Mammary epithelial cell (primary cell): ENCODE measurements at regions of chr11 and their contacts with region 1.

Region 1: DNA sequence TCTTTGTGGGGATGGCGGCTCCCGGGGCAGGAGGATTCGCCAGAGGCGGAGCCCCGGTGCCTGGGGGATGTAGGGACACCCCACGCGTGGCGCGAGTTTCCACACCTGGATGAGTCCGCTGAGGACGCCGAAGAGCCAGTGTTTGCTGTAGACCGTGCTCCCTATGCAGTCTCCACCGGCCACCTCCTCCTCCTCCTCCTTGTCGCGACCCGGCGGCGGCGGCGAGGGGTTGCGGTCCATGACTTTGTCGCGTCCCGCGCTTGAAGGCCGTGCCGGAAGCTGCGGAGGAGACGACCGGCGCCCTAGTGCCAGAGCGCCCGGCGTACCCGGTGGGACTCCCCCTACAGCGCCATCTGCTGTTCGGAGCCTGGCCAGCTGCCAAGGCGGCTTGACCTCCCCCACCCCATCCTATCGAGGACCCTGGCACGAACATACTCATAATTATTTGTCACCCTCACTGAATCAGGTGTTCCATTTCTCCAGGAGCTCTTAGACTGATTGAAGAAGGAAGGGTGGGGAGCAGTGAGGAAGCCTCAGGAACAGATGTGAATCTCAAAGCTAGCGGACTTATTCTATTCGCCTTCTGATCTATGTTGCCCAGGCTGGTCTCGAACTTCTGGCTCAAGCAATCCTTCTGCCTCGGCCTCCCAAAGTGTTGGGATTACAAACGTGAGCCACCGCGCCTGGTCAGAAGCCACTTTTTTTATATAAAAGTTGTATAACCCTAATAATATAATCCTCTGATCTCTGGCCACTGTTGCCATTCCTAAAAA is at the start of gene SAAL1:
- DNase-seq: peak; percentile 65
- H3K4me3 ChIP-seq: peak within 1 kb of the TSS; percentile 84 to 98 (median 93)
- H3K27ac ChIP-seq: peak within 1 kb of the TSS; percentile 56
- H3K4me1 ChIP-seq: peaks cover 18% of the 10 kb centered on the region
- H3K27me3 ChIP-seq: no peaks in the 10 kb centered on the region
- CTCF ChIP-seq: peak; percentile 57 to 81
- total RNA-seq, gene SAAL1: 12.2 to 24.6 TPM

Region 2: DNA sequence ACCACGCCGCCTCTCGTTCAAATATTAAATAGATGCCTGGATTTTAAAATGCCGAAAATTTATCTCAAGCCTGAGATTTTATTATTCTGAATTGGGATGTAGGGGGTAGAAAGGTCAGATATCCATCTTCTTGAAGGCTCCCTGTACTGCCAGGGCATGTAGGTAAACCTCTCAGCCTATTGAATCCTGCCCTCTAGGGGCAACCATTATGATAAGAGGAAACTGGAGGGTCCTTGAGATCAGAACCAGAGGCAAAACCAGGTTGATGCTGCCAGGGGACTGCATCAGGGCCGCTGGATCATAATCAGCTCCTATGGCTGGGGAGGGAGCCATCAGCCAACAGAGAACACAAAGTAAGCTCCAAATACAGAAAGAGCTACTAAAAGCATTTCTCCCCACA is 279.0 kb before region 1 on chr11:
- CTCF ChIA-PET with region 1: no interaction called
- dilution Hi-C with region 1: no loop called
- in situ Hi-C with region 1: no loop called
- intact Hi-C with region 1: no loop called
- DNase-seq: no peak
- H3K4me3 ChIP-seq: no peak overlapping the region
- H3K27ac ChIP-seq: no peak overlapping the region
- H3K4me1 ChIP-seq: no peaks in the 10 kb centered on the region
- H3K27me3 ChIP-seq: no peaks in the 10 kb centered on the region
- CTCF ChIP-seq: peak in 1 of 2 donors; percentile 61

Region 3: DNA sequence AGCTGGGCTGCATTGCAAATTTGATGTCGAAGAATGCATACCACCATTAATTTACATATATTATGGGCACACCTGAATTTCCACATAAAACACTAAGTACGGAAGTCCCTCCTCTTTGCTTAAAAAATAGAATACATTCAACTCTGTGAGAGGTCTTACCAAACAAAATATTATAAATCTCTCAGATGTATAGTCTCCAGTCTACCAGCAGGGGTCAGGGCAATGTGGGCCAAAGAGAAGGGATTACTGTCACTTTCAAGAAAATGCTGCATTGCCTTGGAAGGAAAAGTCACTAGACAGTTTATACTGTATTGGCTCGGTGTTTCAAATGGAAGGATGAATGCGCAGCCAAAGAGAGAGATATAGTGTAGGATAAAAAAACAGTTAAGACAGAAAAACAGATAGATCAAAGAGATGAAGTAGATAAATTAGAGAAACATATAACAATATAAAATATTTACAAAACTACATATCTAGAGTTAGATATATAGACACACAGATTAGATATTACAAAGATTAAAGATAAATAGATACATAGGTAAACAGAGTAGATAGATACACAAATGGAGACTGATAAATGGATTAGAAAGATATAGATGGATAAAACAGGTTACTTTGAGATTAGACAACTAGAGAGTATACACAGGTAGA is 114.1 kb before region 1 on chr11:
- CTCF ChIA-PET with region 1: no interaction called
- dilution Hi-C with region 1: no loop called
- in situ Hi-C with region 1: no loop called
- intact Hi-C with region 1: loop called (anchors 1 kb)
- DNase-seq: peak; percentile 32
- H3K4me3 ChIP-seq: no peak overlapping the region
- H3K27ac ChIP-seq: no peak overlapping the region
- H3K4me1 ChIP-seq: peaks cover 11% of the 10 kb centered on the region
- H3K27me3 ChIP-seq: no peaks in the 10 kb centered on the region
- CTCF ChIP-seq: peak; percentile 83 to 89

Region 4: DNA sequence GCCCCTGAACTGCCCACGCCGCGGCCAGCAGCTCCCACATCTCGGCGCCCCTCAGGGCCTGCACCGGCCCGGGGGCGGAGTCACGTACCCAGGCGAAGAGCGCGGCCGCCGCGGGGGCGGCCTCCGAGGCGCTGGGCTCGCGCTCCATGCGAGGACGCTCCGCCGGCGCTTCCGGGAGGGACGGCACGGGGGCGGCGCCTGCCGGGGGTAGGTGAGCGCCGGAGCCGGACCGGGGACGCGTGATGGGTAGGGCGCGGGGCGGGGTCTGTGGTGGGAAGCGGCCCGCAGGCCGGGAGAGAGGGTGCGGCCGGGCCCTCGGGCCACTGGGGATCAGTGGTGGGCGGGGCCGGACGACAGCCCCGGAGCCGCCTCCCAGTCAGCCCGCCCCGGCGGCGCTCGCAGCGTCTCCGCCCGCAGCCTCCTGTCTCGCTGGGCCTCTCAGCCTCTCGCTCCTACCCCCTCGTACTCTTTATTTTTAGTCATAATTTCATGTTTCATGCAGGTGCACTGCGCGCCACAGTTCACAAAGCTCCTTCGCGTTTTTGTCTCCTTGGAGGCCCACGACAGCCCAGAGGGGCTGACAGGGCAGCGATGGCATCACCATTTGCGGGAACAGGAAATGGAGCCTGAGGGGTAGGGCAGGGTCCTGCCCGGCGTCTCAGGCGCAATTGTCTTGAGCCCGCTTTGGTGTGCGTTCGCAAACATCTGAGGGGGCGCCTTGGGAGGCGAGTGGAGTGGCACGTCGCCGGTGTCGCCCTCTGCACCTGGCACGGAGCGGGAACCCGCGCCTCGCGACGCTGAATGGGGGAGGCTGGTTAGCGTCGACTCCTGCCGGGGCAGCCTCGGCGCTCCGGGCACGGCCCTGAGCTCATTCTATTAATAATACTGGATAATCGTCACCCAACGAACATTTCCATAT is 92.9 kb before region 1 on chr11 and contains the start of gene SERGEF:
- CTCF ChIA-PET with region 1: no interaction called
- dilution Hi-C with region 1: no loop called
- in situ Hi-C with region 1: no loop called
- intact Hi-C with region 1: loop called (anchors 5 kb)
- DNase-seq: peak; percentile 93
- H3K4me3 ChIP-seq: peak within 1 kb of the TSS; percentile 85 to 88 (median 86)
- H3K27ac ChIP-seq: peak within 1 kb of the TSS; percentile 45
- H3K4me1 ChIP-seq: peaks cover 17% of the 10 kb centered on the region
- H3K27me3 ChIP-seq: no peaks in the 10 kb centered on the region
- CTCF ChIP-seq: peak in 1 of 2 donors; percentile 4
- total RNA-seq, gene SERGEF: 23.3 to 30.8 TPM